ENCODE measurements at regions of chr10 and their contacts with region 1.

Region 1: GRCh38 chr10:119478111-119478802 is 64.3 kb downstream of the RGS10 start:
- DNase-seq: peak in 5 of 9 experiments; percentile 18 to 63 (median 39)
- ATAC-seq: peak; percentile 75
- H3K4me3 ChIP-seq: no peak overlapping the region
- H3K4me3 Mint-ChIP-seq: peak overlapping the region; percentile 70
- H3K27ac ChIP-seq: no peak overlapping the region
- H3K27ac Mint-ChIP-seq: peak overlapping the region; percentile 84
- H3K4me1 ChIP-seq: peaks cover 23% of the 10 kb centered on the region
- H3K4me1 Mint-ChIP-seq: peaks cover 27% of the 10 kb centered on the region
- H3K27me3 ChIP-seq: no peaks in the 10 kb centered on the region
- H3K27me3 Mint-ChIP-seq: no peaks in the 10 kb centered on the region
- CTCF ChIP-seq: no peak

Region 2: DNA sequence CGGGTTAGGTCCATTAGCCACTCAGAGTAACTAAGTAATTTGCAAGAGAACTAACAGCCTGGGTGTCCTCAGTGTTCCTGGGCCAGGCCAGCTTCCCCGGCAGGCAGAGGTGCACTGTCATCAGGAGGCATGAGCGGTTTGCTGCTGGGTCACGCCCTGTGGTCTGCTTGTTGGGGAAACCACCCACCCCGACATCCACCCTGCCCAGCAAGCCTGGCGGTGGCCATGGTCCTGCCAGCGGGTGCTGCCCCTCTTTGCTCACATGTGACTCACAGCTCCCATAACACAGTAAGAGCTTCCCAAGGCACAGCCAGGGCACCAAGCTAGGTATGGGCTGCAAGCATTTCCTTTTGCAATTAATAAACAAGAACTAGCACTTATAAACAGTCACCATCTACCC is 11.6 kb before region 1 on chr10:
- CTCF ChIA-PET with region 1: interaction called, 4 read pairs
- POLR2A ChIA-PET with region 1: no interaction called
- intact Hi-C with region 1: loop called in 1 of 2 experiments (anchors 2 kb)
- DNase-seq: peak in 4 of 9 experiments; percentile 17 to 70 (median 46)
- ATAC-seq: peak; percentile 62
- H3K4me3 ChIP-seq: no peak overlapping the region
- H3K4me3 Mint-ChIP-seq: no peak overlapping the region
- H3K27ac ChIP-seq: no peak overlapping the region
- H3K27ac Mint-ChIP-seq: no peak overlapping the region
- H3K4me1 ChIP-seq: peaks cover 7% of the 10 kb centered on the region
- H3K4me1 Mint-ChIP-seq: peaks cover 9% of the 10 kb centered on the region
- H3K27me3 ChIP-seq: no peaks in the 10 kb centered on the region
- H3K27me3 Mint-ChIP-seq: no peaks in the 10 kb centered on the region
- CTCF ChIP-seq: no peak

Region 3: DNA sequence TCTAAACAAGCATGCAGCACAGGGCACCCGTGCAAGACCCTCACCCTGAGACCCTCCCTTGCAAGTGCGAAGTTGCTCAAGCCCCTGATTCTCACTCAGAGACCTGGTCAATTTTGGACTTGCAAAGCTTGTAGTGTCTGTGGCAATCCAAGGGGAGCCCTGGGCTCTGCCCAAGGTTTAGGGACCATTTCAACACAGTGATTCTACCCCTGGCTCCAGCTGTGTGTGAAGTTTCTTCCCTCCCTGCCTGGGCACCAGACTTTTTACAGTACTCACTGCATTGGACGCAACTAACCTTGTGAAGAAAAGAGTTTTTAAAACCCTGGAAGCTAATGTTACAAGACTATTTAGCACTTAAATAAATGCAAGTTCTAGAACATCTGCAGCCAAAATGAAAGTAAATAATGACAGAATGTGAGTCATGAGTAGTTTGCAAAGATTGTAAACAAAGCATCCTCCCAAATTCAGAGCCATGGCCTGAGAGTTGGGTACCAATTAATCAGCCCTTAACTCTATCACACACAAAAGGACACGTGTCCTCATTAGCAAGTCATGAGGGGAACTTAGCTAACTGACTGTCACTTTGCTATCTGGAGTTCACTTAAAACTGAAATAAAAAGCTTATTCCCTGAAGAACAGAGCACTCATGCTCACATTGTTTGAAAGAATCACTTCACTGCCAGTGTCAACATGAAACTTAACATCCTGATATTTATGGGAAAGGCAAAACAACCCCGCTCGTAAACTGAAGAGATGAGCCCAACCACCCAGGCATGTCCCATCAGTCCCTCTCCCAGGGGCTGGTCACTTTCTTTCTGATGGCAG is 16.2 kb after region 1 on chr10:
- CTCF ChIA-PET with region 1: interaction called, 29 read pairs
- POLR2A ChIA-PET with region 1: interaction called, 6 read pairs
- intact Hi-C with region 1: no loop called
- DNase-seq: no peak
- ATAC-seq: peak; percentile 16
- H3K4me3 ChIP-seq: no peak overlapping the region
- H3K4me3 Mint-ChIP-seq: peak overlapping the region; percentile 44
- H3K27ac ChIP-seq: peak overlapping the region in 1 of 2 experiments; percentile 40
- H3K27ac Mint-ChIP-seq: peak overlapping the region; percentile 93
- H3K4me1 ChIP-seq: peaks cover 87% of the 10 kb centered on the region
- H3K4me1 Mint-ChIP-seq: peaks cover 74% of the 10 kb centered on the region
- H3K27me3 ChIP-seq: no peaks in the 10 kb centered on the region
- H3K27me3 Mint-ChIP-seq: no peaks in the 10 kb centered on the region
- CTCF ChIP-seq: no peak

Measured in CD8-positive, alpha-beta T cell (primary cell).